CD8-positive, alpha-beta T cell (primary cell): ENCODE measurements at regions of chr2 and their contacts with region 1.

Region 1: DNA sequence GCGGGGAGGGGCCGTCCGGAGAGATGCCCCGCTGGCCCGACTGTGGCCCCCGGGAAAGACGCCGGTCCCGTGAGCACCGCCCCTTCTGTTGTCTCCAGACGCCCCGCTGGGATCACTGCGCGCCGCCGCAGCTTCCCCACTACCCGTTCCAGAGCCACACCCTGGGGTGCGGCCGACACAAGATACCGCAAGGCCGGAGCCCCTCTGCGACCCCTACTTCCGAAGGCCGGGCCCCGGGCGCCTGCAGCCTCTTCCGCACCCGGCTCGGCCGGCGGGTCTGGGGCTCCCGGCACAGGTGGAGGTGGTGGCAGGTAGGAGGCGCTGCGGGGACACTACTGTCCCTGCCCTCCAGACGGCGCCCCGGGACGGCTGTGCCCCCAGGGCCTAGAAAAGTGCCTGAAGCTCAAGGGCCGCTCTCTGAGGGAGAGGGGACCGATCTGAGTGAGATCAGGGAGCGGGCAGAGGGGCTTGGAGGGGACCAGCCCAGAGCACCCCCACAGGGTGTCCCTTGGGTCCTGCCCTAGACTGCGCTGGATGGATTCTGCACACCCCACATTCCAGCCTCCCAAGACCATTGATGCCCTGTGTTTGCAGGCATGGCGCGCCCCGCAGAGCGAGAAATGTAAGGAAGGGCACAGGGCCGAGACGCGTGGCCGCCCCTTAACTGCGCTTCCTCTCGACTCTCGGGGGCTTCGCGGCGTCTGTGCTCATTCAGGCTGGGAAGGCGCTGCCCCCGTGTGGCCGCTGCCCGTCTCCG is 80.0 kb downstream of the GFPT1 start:
- DNase-seq: peak; percentile 36 to 81 (median 68)
- ATAC-seq: peak; percentile 89
- H3K4me3 ChIP-seq: peak overlapping the region; percentile 49 to 58
- H3K4me3 Mint-ChIP-seq: peak overlapping the region; percentile 79
- H3K27ac ChIP-seq: no peak overlapping the region
- H3K27ac Mint-ChIP-seq: no peak overlapping the region
- H3K4me1 ChIP-seq: peaks cover 13% of the 10 kb centered on the region
- H3K4me1 Mint-ChIP-seq: peaks cover 21% of the 10 kb centered on the region
- H3K27me3 ChIP-seq: peaks cover 4 to 15% of the 10 kb centered on the region in 2 experiments
- H3K27me3 Mint-ChIP-seq: peaks cover 22% of the 10 kb centered on the region
- CTCF ChIP-seq: peak; percentile 78

Region 2: GRCh38 chr2:68943581-68944568 is 363.1 kb before region 1 on chr2:
- CTCF ChIA-PET with region 1: interaction called, 6 read pairs
- POLR2A ChIA-PET with region 1: no interaction called
- intact Hi-C with region 1: loop called (anchors 2 to 5 kb)
- DNase-seq: peak; percentile 18 to 72 (median 53)
- ATAC-seq: peak; percentile 75
- H3K4me3 ChIP-seq: no peak overlapping the region
- H3K4me3 Mint-ChIP-seq: no peak overlapping the region
- H3K27ac ChIP-seq: no peak overlapping the region
- H3K27ac Mint-ChIP-seq: no peak overlapping the region
- H3K4me1 ChIP-seq: no peaks in the 10 kb centered on the region
- H3K4me1 Mint-ChIP-seq: peaks cover 4% of the 10 kb centered on the region
- H3K27me3 ChIP-seq: peaks cover 0 to 13% of the 10 kb centered on the region in 2 experiments
- H3K27me3 Mint-ChIP-seq: peaks cover 27% of the 10 kb centered on the region
- CTCF ChIP-seq: peak; percentile 84

Region 3: DNA sequence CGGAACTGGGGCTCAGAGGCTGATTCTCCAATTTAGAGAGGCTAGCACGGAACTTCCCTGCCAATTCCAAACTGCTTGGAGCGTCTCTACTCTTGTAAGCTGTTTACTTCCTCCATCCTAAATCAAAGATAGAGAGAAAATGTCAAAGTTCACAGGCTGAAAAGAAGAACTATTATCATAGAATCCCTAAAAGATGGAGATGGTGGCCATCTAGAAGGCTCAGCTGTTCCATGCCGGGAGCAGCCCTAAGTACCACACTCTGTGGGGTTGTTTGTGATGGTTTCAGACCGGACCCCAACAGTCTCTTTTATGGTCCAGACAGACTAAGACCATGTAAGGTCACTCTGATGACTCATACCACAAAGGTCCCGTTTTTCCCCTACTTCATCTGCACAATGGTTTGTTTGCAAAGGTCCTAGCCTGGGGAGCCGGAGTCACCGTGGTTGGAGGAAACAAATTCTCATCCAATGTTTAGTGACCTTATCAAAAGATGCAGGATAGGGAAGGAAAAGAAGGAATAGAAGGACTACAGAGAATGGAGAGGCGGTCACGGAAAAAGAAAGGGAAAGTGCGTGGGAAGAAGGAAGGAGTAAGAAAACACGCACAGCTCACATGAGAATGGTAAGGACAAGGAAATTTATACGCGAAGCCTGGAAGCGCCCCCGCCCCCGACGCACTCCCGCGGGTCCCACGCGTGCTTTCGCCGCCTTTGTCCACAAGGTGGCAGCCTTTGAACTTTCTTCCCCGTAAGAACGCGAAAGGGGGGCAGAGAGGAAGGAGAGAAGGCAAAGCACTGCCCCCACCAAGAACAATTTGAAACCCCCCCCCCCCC is 294.5 kb before region 1 on chr2:
- CTCF ChIA-PET with region 1: interaction called, 5 read pairs
- POLR2A ChIA-PET with region 1: no interaction called
- intact Hi-C with region 1: loop called (anchors 2 to 5 kb)
- DNase-seq: peak; percentile 14 to 69 (median 51)
- ATAC-seq: peak; percentile 57
- H3K4me3 ChIP-seq: peak overlapping the region; percentile 53 to 64
- H3K4me3 Mint-ChIP-seq: peak overlapping the region; percentile 79
- H3K27ac ChIP-seq: no peak overlapping the region
- H3K27ac Mint-ChIP-seq: no peak overlapping the region
- H3K4me1 ChIP-seq: peaks cover 10% of the 10 kb centered on the region
- H3K4me1 Mint-ChIP-seq: peaks cover 14% of the 10 kb centered on the region
- H3K27me3 ChIP-seq: peaks cover 7 to 25% of the 10 kb centered on the region in 2 experiments
- H3K27me3 Mint-ChIP-seq: peaks cover 32% of the 10 kb centered on the region
- CTCF ChIP-seq: peak; percentile 62

Region 4: DNA sequence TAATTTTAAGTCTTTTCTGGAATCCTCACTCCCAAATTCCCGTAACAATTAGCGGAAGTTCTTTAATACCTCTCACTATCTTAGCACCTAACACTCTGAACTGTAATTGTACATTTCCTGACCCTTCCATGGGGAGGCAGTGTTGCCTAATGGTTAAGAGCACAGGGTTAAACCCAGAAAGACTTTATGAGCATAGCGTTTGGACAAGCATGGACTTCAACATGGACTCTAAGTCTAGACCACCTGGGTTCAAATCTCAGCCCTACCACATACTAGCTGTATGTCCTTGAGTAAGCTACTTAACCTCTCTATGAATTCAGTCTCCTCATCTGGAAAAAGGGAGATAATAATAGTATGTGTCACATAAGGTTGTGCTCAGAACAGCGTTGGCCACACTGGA is 281.0 kb before region 1 on chr2:
- CTCF ChIA-PET with region 1: interaction called, 3 read pairs
- POLR2A ChIA-PET with region 1: no interaction called
- intact Hi-C with region 1: loop called in 1 of 2 experiments (anchors 5 kb)
- DNase-seq: peak in 1 of 9 experiments; percentile 24
- ATAC-seq: no peak
- H3K4me3 ChIP-seq: no peak overlapping the region
- H3K4me3 Mint-ChIP-seq: no peak overlapping the region
- H3K27ac ChIP-seq: no peak overlapping the region
- H3K27ac Mint-ChIP-seq: no peak overlapping the region
- H3K4me1 ChIP-seq: no peaks in the 10 kb centered on the region
- H3K4me1 Mint-ChIP-seq: no peaks in the 10 kb centered on the region
- H3K27me3 ChIP-seq: peaks cover 0 to 4% of the 10 kb centered on the region in 2 experiments
- H3K27me3 Mint-ChIP-seq: peaks cover 19% of the 10 kb centered on the region
- CTCF ChIP-seq: no peak

Region 5: GRCh38 chr2:69272803-69273471 is 34.1 kb before region 1 on chr2:
- CTCF ChIA-PET with region 1: no interaction called
- POLR2A ChIA-PET with region 1: no interaction called
- intact Hi-C with region 1: no loop called
- DNase-seq: no peak
- ATAC-seq: no peak
- H3K4me3 ChIP-seq: no peak overlapping the region
- H3K4me3 Mint-ChIP-seq: no peak overlapping the region
- H3K27ac ChIP-seq: no peak overlapping the region
- H3K27ac Mint-ChIP-seq: no peak overlapping the region
- H3K4me1 ChIP-seq: no peaks in the 10 kb centered on the region
- H3K4me1 Mint-ChIP-seq: no peaks in the 10 kb centered on the region
- H3K27me3 ChIP-seq: peaks cover 0 to 3% of the 10 kb centered on the region in 2 experiments
- H3K27me3 Mint-ChIP-seq: peaks cover 44% of the 10 kb centered on the region
- CTCF ChIP-seq: no peak